Left colon (tissue), 2 donors: ENCODE measurements at regions of chr19 and their contacts with region 1.

Region 1: GRCh38 chr19:11125994-11126685 is 29.4 kb downstream of the SPC24 start:
- DNase-seq: peak; percentile 59 to 87
- ATAC-seq: peak; percentile 57

Region 2: DNA sequence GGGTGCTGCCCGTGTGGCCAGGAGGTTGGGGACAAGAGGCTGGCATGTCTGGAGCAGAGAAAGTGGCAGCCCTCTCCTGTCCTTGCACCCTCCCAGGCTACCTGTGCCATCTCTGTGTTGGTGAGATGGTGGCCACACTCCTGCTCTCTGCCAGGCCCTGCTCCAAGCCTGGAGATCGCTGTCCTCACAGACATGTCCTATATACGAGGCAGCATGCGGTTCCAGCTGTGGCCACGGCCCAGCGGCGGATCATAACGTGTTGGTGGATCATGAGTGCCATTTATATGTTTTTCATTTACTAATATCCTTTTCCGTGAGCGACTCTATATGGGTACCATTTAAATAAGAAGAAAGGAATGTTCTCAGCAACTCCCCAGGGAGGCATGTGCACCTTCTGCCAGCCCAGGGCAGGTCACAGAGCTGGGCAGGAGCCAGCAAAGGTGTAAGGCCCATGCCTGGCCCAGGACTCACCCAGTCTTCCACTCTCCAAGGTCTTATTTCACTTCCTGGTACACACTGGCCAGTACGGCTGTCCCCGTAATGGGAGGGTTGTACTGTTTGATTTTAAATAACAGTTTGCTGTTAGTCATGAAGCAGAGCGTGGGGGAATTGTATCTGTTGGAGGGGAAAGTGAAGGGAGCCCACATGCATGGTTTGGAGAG is 84.0 kb before region 1 on chr19:
- intact Hi-C with region 1: loop called in 1 of 2 experiments (anchors 10 kb)
- DNase-seq: no peak
- ATAC-seq: peak; percentile 84

Region 3: GRCh38 chr19:11324079-11324661 is 198.0 kb after region 1 on chr19:
- intact Hi-C with region 1: no loop called
- DNase-seq: peak; percentile 68 to 72
- ATAC-seq: peak; percentile 89